Esophagus squamous epithelium (tissue), 5 donors: ENCODE measurements at regions of chr15 and their contacts with region 1.

Region 1: GRCh38 chr15:52326756-52327155 is 31.2 kb upstream of the MYO5C start:
- DNase-seq: no peak
- H3K4me3 ChIP-seq: no peak overlapping the region
- H3K27ac ChIP-seq: no peak overlapping the region
- H3K4me1 ChIP-seq: no peaks in the 10 kb centered on the region
- H3K27me3 ChIP-seq: no peaks in the 10 kb centered on the region
- CTCF ChIP-seq: no peak
- POLR2A ChIP-seq: no peak

Region 2: GRCh38 chr15:52735231-52736089 is 408.7 kb after region 1 on chr15:
- intact Hi-C with region 1: loop called (anchors 10 kb)
- DNase-seq: no peak
- H3K4me3 ChIP-seq: no peak overlapping the region
- H3K27ac ChIP-seq: no peak overlapping the region
- H3K4me1 ChIP-seq: peaks cover 0 to 6% (median 4%) of the 10 kb centered on the region in 3 donors
- H3K27me3 ChIP-seq: no peaks in the 10 kb centered on the region
- CTCF ChIP-seq: peak; percentile 81 to 90 (median 83)
- POLR2A ChIP-seq: no peak